Activated naive CD4-positive, alpha-beta T cell treated with anti-CD3 and anti-CD28 coated beads for 36 hours (primary cell): ENCODE measurements at regions of chr18 and their contacts with region 1.

Region 1: DNA sequence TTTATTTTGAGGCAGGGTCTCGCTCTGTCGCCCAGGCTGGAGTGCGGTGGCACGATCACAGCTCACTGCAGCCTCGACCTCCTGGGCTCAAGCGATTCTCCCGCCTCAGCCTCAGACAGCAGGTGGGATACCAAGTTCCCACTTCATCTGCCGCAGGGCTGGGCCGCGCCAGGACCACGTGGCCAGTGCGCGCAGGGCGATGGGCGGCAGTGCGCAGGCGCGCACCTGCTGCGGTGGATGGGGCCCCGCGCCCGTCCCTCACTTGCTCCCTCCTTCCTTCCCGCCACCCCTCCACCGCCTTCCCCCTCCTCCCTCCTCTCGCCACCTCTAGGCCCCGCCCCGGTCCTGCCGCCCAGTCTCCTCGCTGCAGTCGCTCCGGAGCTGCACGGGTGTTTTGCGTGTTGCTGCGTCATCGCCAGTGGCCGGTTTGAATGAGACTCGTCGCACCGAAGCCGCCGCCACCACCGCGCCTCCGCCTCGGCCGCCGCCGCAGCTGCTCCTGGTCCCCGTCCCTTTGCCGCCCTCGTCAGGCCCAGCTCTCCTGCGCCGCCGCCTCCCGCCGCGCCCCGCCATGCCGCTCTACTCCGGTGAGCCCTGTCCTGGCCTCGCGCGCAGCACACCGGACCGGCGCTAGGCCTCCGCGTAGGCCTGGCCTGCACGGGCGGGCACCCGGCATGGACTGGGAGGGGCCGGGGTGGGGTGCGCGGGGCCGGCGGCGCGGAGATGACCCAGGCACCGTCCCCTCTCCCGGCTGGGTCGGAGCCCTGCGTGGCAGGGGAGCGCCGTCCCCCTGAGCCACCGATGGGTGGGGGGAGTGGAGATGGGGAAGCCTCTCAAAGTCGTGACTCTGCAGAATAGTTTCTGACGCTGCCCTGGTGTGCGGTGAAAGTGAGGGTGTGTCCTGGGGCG is at the start of gene USP14:
- DNase-seq: peak; percentile 99
- H3K4me3 Mint-ChIP-seq: peak within 1 kb of the TSS; percentile 85
- H3K27ac Mint-ChIP-seq: peak within 1 kb of the TSS; percentile 92
- H3K4me1 Mint-ChIP-seq: peaks cover 37% of the 10 kb centered on the region
- H3K27me3 Mint-ChIP-seq: no peaks in the 10 kb centered on the region
- total RNA-seq, gene USP14: 90.0 to 96.6 TPM

Region 2: GRCh38 chr18:111292-112014 is 46.9 kb before region 1 on chr18:
- CTCF ChIA-PET with region 1: no interaction called
- intact Hi-C with region 1: loop called (anchors 2 kb)
- DNase-seq: peak; percentile 69
- H3K4me3 Mint-ChIP-seq: peak overlapping the region; percentile 84
- H3K27ac Mint-ChIP-seq: peak overlapping the region; percentile 96
- H3K4me1 Mint-ChIP-seq: peaks cover 16% of the 10 kb centered on the region
- H3K27me3 Mint-ChIP-seq: no peaks in the 10 kb centered on the region

Region 3: GRCh38 chr18:267688-268552 is 109.5 kb after region 1 on chr18 and contains the start of gene THOC1:
- CTCF ChIA-PET with region 1: interaction called, 5 read pairs
- intact Hi-C with region 1: loop called (anchors 1 kb)
- DNase-seq: peak; percentile 97
- H3K4me3 Mint-ChIP-seq: peak within 1 kb of the TSS; percentile 95
- H3K27ac Mint-ChIP-seq: peak within 1 kb of the TSS; percentile 99
- H3K4me1 Mint-ChIP-seq: peaks cover 39% of the 10 kb centered on the region
- H3K27me3 Mint-ChIP-seq: no peaks in the 10 kb centered on the region
- total RNA-seq, gene THOC1: 63.5 to 66.2 TPM

Region 4: GRCh38 chr18:623761-624620 is 465.6 kb after region 1 on chr18:
- CTCF ChIA-PET with region 1: no interaction called
- intact Hi-C with region 1: no loop called
- DNase-seq: peak; percentile 81
- H3K4me3 Mint-ChIP-seq: no peak overlapping the region
- H3K27ac Mint-ChIP-seq: no peak overlapping the region
- H3K4me1 Mint-ChIP-seq: no peaks in the 10 kb centered on the region
- H3K27me3 Mint-ChIP-seq: no peaks in the 10 kb centered on the region

Region 5: DNA sequence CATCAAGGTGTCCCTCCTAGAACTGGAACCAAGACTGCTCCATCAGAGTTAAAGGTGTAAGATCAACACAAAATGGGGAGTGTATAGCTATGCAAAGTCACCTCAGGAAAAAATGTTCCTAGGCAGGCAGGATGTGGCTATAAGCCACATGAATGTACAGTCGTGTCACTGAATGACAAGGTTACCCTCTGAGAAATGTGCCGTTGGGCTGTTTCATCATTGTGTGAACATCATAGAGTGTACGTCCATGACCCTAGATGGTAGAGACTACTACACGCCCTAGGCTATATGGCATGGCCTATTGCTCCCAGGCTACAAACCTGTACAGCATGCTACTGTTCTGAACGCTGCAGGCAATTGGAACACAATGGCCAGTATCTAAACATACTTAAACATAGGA is 523.6 kb after region 1 on chr18:
- CTCF ChIA-PET with region 1: no interaction called
- intact Hi-C with region 1: loop called (anchors 1 kb)
- DNase-seq: peak; percentile 77
- H3K4me3 Mint-ChIP-seq: no peak overlapping the region
- H3K27ac Mint-ChIP-seq: peak overlapping the region; percentile 73
- H3K4me1 Mint-ChIP-seq: peaks cover 17% of the 10 kb centered on the region
- H3K27me3 Mint-ChIP-seq: no peaks in the 10 kb centered on the region

Region 6: GRCh38 chr18:1296237-1296636 is 1137.9 kb after region 1 on chr18:
- CTCF ChIA-PET with region 1: no interaction called
- intact Hi-C with region 1: no loop called
- DNase-seq: no peak
- H3K4me3 Mint-ChIP-seq: no peak overlapping the region
- H3K27ac Mint-ChIP-seq: no peak overlapping the region
- H3K4me1 Mint-ChIP-seq: no peaks in the 10 kb centered on the region
- H3K27me3 Mint-ChIP-seq: peaks cover 2% of the 10 kb centered on the region